ENCODE measurements at regions of chr18 and their contacts with region 1.

Region 1: DNA sequence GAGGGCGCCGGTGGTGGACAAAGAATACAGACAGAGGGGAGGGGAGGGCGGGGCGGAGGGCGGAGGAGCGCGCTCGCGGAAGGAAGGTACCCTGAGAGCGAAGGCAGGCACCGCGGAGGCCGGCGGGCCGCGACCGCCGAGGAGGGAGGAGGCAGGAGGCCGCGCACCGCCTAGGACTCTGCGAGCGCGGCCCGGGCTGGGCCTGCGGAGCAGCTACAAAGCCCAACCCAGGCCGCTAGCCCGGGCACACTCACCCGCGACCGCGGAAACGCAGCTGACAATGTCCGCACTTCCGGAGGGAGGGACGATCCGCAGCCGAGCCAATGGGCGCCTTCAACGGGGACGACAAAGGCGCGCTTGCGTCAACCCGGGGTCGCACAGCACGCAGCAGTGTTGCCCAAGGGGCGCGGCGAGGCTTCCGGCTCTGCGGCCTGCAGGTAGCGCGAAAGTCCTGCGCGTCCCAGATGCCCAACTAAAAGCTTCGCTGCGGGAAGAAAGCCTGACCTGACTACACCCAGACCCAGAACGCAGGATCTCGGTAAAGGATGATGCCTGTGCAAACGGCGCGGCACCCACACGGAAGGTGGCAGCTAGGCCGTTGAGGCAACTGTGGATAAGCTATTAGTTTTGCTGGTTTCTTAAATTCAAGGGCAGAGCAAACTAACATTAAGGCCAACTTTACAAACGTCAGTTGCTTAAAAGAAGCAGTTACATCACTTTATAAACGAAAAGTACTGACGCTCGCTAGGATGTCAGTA is at the start of gene C18orf32:
- DNase-seq: peak; percentile 97
- ATAC-seq: peak; percentile 91
- H3K4me3 Mint-ChIP-seq: peak within 1 kb of the TSS; percentile 87
- H3K27ac Mint-ChIP-seq: peak within 1 kb of the TSS; percentile 93
- H3K4me1 Mint-ChIP-seq: peaks cover 58% of the 10 kb centered on the region
- H3K27me3 Mint-ChIP-seq: no peaks in the 10 kb centered on the region
- total RNA-seq, gene C18orf32: 14.9 to 20.9 TPM

Region 2: GRCh38 chr18:49459404-49460171 is 27.5 kb before region 1 on chr18:
- CTCF ChIA-PET with region 1: interaction called, 8 read pairs
- POLR2A ChIA-PET with region 1: interaction called, 14 read pairs
- DNase-seq: peak; percentile 42
- ATAC-seq: peak; percentile 44
- H3K4me3 Mint-ChIP-seq: peak overlapping the region; percentile 82
- H3K27ac Mint-ChIP-seq: peak overlapping the region; percentile 81
- H3K4me1 Mint-ChIP-seq: peaks cover 33% of the 10 kb centered on the region
- H3K27me3 Mint-ChIP-seq: no peaks in the 10 kb centered on the region

Measured in activated CD8-positive, alpha-beta T cell treated with anti-CD3 and anti-CD28 coated beads, Interleukin-2, amount 10 ng/mL, durations not matched to agents 7 days and 5 days (primary cell).